Naive thymus-derived CD4-positive, alpha-beta T cell (primary cell): ENCODE measurements at regions of chr3 and their contacts with region 1.

Region 1: GRCh38 chr3:172161959-172162358 is 122.6 kb downstream of the FNDC3B start:
- DNase-seq: no peak
- ATAC-seq: no peak
- H3K4me3 ChIP-seq: no peak overlapping the region
- H3K4me3 Mint-ChIP-seq: no peak overlapping the region
- H3K27ac ChIP-seq: no peak overlapping the region
- H3K27ac Mint-ChIP-seq: no peak overlapping the region
- H3K4me1 ChIP-seq: no peaks in the 10 kb centered on the region
- H3K4me1 Mint-ChIP-seq: peaks cover 4 to 26% (median 11%) of the 10 kb centered on the region in 7 donors
- H3K27me3 ChIP-seq: no peaks in the 10 kb centered on the region
- H3K27me3 Mint-ChIP-seq: no peaks in the 10 kb centered on the region

Region 2: DNA sequence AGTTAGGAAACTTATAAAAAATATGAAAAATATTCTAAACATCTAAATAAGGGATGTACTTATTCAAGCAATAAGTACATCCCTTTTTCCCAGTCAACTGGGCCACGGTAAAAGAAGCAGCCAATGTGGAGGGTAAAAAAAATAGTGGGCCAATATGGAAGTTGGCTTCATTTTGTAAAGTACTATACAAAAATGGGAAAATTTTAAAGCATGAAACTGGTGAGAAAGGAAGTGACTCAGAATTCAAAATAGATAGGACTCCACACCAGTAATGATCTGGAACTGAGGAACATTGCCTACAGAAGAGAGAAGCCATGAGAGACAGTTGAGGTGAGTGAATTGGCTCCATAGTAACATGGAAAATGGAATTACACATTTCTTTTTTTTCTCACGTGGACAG is 13.7 kb before region 1 on chr3:
- CTCF ChIA-PET with region 1: no interaction called
- POLR2A ChIA-PET with region 1: no interaction called
- intact Hi-C with region 1: loop called in 1 of 2 experiments (anchors 2 kb)
- DNase-seq: no peak
- ATAC-seq: peak; percentile 27
- H3K4me3 ChIP-seq: no peak overlapping the region
- H3K4me3 Mint-ChIP-seq: no peak overlapping the region
- H3K27ac ChIP-seq: no peak overlapping the region
- H3K27ac Mint-ChIP-seq: peak overlapping the region in 1 of 9 donors; percentile 76
- H3K4me1 ChIP-seq: peaks cover 0 to 5% of the 10 kb centered on the region in 2 donors
- H3K4me1 Mint-ChIP-seq: peaks cover 32 to 69% (median 44%) of the 10 kb centered on the region in 7 donors
- H3K27me3 ChIP-seq: no peaks in the 10 kb centered on the region
- H3K27me3 Mint-ChIP-seq: no peaks in the 10 kb centered on the region